MCF 10A (cell line): ENCODE measurements at regions of chr4 and their contacts with region 1.

Region 1: GRCh38 chr4:107989537-107990386 is at the start of gene HADH:
- DNase-seq: peak; percentile 91
- H3K4me3 Mint-ChIP-seq: peak within 1 kb of the TSS; percentile 90
- H3K27ac Mint-ChIP-seq: peak within 1 kb of the TSS; percentile 77
- H3K4me1 Mint-ChIP-seq: peaks cover 20% of the 10 kb centered on the region
- H3K27me3 Mint-ChIP-seq: no peaks in the 10 kb centered on the region
- CTCF ChIP-seq: no peak
- total RNA-seq, gene HADH: 19.2 and 26.2 TPM in 2 replicates

Region 2: GRCh38 chr4:107930821-107931774 is 58.7 kb before region 1 on chr4 and contains the start of gene CYP2U1:
- CTCF ChIA-PET with region 1: no interaction called
- POLR2A ChIA-PET with region 1: interaction called, 5 read pairs
- intact Hi-C with region 1: loop called (anchors 5 kb)
- DNase-seq: peak; percentile 79
- H3K4me3 Mint-ChIP-seq: peak within 1 kb of the TSS; percentile 81
- H3K27ac Mint-ChIP-seq: no peak within 1 kb of the TSS
- H3K4me1 Mint-ChIP-seq: peaks cover 18% of the 10 kb centered on the region
- H3K27me3 Mint-ChIP-seq: no peaks in the 10 kb centered on the region
- CTCF ChIP-seq: no peak
- total RNA-seq, gene CYP2U1: 2.5 and 2.8 TPM in 2 replicates

Region 3: DNA sequence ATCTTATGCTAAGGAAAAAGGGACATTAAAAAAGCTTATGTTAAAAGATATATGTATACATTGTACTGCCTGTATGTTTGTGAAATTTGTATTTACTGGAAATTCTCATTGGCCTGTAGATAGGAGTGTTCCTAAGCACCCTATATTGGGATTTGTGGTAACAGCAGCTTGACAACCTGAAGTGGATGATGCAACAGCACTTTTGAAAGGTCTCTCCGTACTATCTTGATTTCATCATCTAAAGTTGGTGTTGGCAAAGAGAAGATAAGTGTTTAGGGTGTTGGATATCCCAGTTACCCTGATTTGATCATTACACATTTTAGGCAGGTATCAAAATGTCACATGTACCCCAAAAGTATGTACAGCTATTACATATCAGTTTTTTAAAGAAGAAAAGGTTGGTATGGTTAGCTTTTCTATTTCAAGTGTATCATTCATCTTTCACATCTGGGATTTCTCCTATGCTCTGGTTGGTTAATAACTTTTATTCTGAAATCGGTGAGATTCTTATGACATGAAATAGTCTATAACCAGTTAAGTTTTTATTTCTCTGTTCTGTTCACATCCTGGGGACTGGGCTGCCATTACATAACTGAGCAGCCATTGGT is 10.3 kb after region 1 on chr4:
- CTCF ChIA-PET with region 1: no interaction called
- POLR2A ChIA-PET with region 1: interaction called, 14 read pairs
- intact Hi-C with region 1: no loop called
- DNase-seq: peak; percentile 71
- H3K4me3 Mint-ChIP-seq: no peak overlapping the region
- H3K27ac Mint-ChIP-seq: peak overlapping the region; percentile 52
- H3K4me1 Mint-ChIP-seq: peaks cover 42% of the 10 kb centered on the region
- H3K27me3 Mint-ChIP-seq: no peaks in the 10 kb centered on the region
- CTCF ChIP-seq: no peak